ENCODE measurements at regions of chr1 and their contacts with region 1.

Region 1: DNA sequence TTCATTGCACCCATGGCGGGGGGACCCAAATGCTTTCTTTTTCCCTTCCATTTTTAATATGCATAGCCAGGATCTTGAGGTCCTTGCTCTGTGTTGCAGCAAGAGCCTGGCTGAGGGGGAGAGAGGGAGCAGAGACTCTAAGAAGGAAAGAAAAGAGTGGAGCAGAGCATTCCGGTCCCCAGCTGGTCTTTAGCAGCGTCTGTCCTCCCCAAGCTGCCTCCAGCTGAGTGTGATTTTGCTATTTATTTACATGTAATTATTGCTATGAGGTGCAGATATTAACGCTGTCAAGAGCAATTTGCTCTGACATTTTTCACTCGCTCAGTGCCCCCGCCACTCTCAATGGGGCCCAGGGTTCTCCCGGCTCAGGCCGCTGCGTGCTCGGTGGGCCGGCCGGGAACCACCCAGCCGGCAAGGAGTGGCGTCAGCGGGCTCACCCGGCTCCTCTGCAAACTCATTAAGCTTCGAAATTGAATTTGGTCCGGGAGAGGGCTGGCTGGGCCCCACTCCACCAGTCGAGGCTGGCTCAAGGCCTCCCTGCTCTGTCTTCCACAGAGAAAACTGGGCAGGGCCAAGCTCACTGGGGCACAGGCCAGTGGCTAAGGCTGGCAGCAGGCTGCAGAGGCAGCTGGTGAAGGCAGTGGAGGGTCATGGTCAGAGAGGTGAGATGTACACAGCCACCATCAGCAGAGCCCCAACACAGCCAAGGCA is 93.2 kb downstream of the PAX7 start:
- DNase-seq: peak in 23 of 42 donors; percentile 5 to 61 (median 27)

Region 2: DNA sequence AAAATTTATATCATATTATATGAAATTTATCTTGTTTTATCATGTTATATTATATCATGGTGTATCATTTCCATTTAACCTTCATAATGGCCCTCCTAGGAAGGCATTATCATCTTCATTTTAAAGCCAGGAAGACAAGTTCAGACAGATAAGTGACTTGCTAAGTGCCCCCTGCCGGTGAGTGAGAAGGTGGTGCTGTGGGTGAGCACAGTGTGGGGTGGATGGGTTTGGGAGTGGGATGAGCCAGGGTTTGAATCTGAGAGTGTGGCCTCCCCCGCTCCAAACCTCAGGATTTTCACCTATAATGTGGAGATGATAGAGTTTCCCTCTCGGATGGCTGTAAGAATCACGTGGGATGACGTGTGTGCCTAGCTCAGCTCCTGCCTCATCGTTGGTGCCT is 725.0 kb before region 1 on chr1:
- intact Hi-C with region 1: no loop called
- DNase-seq: peak in 2 of 42 donors; percentile 9 to 38

Region 3: GRCh38 chr1:18989176-18989809 is 265.4 kb after region 1 on chr1:
- intact Hi-C with region 1: loop called (anchors 10 kb)
- DNase-seq: peak in 2 of 42 donors; percentile 18